Mammary epithelial cell (primary cell): ENCODE measurements at regions of chr6 and their contacts with region 1.

Region 1: GRCh38 chr6:36442671-36443470 is at the starts of genes KCTD20 and PXT1:
- DNase-seq: peak; percentile 83
- H3K4me3 ChIP-seq: peak within 1 kb of the TSS; percentile 61 to 96 (median 83)
- H3K27ac ChIP-seq: peak within 1 kb of the TSS; percentile 94
- H3K4me1 ChIP-seq: peaks cover 24% of the 10 kb centered on the region
- H3K27me3 ChIP-seq: no peaks in the 10 kb centered on the region
- CTCF ChIP-seq: peak in 1 of 2 donors; percentile 4
- total RNA-seq, gene KCTD20: 18.0 to 31.8 TPM
- total RNA-seq, gene PXT1: under 0.01 to 0.16 TPM

Region 2: GRCh38 chr6:36033935-36034334 is 408.9 kb before region 1 on chr6:
- CTCF ChIA-PET with region 1: no interaction called
- dilution Hi-C with region 1: no loop called
- in situ Hi-C with region 1: no loop called
- intact Hi-C with region 1: no loop called
- DNase-seq: peak; percentile 16
- H3K4me3 ChIP-seq: no peak overlapping the region
- H3K27ac ChIP-seq: no peak overlapping the region
- H3K4me1 ChIP-seq: peaks cover 17% of the 10 kb centered on the region
- H3K27me3 ChIP-seq: no peaks in the 10 kb centered on the region
- CTCF ChIP-seq: no peak

Region 3: GRCh38 chr6:36314221-36315014 is 128.5 kb before region 1 on chr6:
- CTCF ChIA-PET with region 1: no interaction called
- dilution Hi-C with region 1: no loop called
- in situ Hi-C with region 1: no loop called
- intact Hi-C with region 1: no loop called
- DNase-seq: peak; percentile 79
- H3K4me3 ChIP-seq: no peak overlapping the region
- H3K27ac ChIP-seq: no peak overlapping the region
- H3K4me1 ChIP-seq: no peaks in the 10 kb centered on the region
- H3K27me3 ChIP-seq: peaks cover 2% of the 10 kb centered on the region
- CTCF ChIP-seq: no peak

Region 4: GRCh38 chr6:36349240-36349639 is 93.6 kb before region 1 on chr6:
- CTCF ChIA-PET with region 1: no interaction called
- dilution Hi-C with region 1: loop called (anchors 5 kb)
- in situ Hi-C with region 1: no loop called
- intact Hi-C with region 1: no loop called
- DNase-seq: peak; percentile 54
- H3K4me3 ChIP-seq: no peak overlapping the region
- H3K27ac ChIP-seq: no peak overlapping the region
- H3K4me1 ChIP-seq: no peaks in the 10 kb centered on the region
- H3K27me3 ChIP-seq: no peaks in the 10 kb centered on the region
- CTCF ChIP-seq: no peak

Region 5: GRCh38 chr6:36423101-36423824 is 19.6 kb before region 1 on chr6:
- CTCF ChIA-PET with region 1: no interaction called
- dilution Hi-C with region 1: no loop called
- in situ Hi-C with region 1: no loop called
- intact Hi-C with region 1: loop called (anchors 1 kb)
- DNase-seq: peak; percentile 98
- H3K4me3 ChIP-seq: peak overlapping the region; percentile 53 to 62 (median 55)
- H3K27ac ChIP-seq: peak overlapping the region; percentile 77
- H3K4me1 ChIP-seq: peaks cover 39% of the 10 kb centered on the region
- H3K27me3 ChIP-seq: no peaks in the 10 kb centered on the region
- CTCF ChIP-seq: peak; percentile 44 to 78

Region 6: DNA sequence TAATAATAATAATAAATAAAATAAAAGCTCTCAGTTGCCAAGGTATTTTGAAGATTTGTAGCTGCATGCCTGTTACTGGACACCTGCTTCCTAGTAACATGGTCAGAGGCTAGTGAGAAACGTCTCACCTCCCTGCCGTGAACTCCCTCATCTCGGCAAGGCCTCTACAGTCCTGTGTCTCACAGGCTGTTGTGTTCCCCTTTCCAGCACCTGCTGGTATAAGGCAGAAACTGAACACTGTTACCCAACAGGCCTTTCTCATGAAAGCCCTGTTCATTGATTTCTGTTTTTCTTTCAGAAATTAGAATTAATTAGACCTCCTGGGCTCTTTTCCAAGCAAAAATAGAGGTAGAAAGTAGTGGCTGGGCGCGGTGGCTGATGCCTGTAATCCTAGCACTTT is 133.7 kb after region 1 on chr6:
- CTCF ChIA-PET with region 1: no interaction called
- dilution Hi-C with region 1: no loop called
- in situ Hi-C with region 1: no loop called
- intact Hi-C with region 1: loop called (anchors 5 kb)
- DNase-seq: no peak
- H3K4me3 ChIP-seq: no peak overlapping the region
- H3K27ac ChIP-seq: peak overlapping the region; percentile 74
- H3K4me1 ChIP-seq: peaks cover 32% of the 10 kb centered on the region
- H3K27me3 ChIP-seq: no peaks in the 10 kb centered on the region
- CTCF ChIP-seq: no peak

Region 7: DNA sequence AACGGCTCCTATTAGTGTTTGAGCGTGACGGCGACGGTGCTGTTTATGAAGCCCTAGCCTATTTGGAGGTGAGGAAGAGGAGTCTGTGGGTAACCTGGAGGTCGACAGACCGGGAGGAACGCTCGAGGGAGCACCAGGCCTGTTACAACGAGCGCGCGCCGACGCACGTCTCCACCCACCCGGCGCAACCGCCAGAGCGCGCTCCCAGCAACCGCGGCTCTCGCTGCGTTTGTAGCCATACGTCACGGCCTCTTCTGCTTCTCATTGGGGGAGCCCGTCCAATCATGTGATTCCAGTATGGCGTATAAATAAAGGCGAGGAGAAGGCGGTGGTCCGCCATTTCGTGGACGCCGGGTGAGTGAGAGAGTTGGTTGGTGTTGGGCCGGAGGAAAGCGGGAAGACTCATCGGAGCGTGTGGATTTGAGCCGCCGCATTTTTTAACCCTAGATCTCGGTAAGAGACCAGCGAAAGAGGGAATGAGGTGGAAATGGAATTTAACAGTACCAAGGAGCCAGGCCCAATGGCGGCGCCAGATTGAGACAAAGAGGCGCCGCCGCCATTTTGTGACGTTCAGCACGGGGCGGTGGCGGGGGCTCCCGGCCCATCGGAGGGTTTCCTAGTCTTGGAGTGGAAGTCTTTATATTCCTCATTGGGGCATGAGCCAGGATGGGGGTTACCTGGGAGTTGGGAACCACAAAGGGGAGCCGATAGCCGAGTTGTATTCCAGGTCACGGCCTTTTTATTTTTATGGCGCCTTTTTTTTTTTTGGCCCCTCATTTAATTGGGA is 151.4 kb after region 1 on chr6 and contains the start of gene SRSF3:
- CTCF ChIA-PET with region 1: interaction called, 3 read pairs
- dilution Hi-C with region 1: no loop called
- in situ Hi-C with region 1: no loop called
- intact Hi-C with region 1: loop called (anchors 2 kb)
- DNase-seq: peak; percentile 97
- H3K4me3 ChIP-seq: peak within 1 kb of the TSS; percentile 68 to 99 (median 92)
- H3K27ac ChIP-seq: peak within 1 kb of the TSS; percentile 97
- H3K4me1 ChIP-seq: peaks cover 35% of the 10 kb centered on the region
- H3K27me3 ChIP-seq: no peaks in the 10 kb centered on the region
- CTCF ChIP-seq: peak in 1 of 2 donors; percentile 57
- total RNA-seq, gene SRSF3: 167 to 323 TPM

Region 8: DNA sequence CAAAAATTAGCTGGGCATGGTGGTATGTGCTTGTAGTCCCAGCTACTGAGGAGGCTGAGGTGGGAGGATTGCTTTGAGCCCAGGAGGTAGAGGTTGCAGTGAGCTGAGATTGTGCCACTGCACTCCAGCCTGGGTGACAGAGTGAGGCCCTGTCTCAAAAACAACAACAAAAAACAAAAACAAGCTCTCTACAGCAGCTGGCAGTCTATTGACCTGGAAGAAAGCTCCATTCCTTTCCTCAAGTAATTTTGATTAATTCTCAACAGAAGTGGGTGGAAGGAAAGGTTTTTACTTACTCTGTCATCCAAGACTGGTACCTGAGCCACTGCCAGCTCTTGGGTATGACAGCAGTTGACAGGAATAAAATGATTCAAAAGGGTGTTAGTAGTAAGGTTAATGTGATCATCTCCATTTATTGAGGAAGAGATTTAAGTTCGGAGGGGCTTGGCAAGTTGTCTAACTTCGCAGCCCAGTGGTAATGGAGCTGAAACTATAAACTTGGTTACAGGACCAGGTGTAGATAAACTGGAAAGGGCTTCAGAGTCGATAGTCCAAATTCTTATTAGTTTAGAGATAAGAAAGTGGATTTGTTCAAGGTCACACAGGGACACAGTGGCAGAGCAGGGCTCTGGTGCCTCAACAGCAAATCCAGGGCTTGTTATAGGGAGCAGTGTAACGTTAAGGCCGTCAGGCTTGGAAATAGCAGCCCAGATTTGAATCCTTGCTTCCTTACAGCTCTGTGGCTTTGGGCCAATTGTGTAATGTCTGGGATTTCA is 166.1 kb after region 1 on chr6:
- CTCF ChIA-PET with region 1: no interaction called
- dilution Hi-C with region 1: no loop called
- in situ Hi-C with region 1: no loop called
- intact Hi-C with region 1: loop called (anchors 1 kb)
- DNase-seq: no peak
- H3K4me3 ChIP-seq: no peak overlapping the region
- H3K27ac ChIP-seq: no peak overlapping the region
- H3K4me1 ChIP-seq: peaks cover 29% of the 10 kb centered on the region
- H3K27me3 ChIP-seq: no peaks in the 10 kb centered on the region
- CTCF ChIP-seq: no peak